Activated naive CD4-positive, alpha-beta T cell treated with anti-CD3 and anti-CD28 coated beads for 36 hours (primary cell): ENCODE measurements at regions of chr11 and their contacts with region 1.

Region 1: DNA sequence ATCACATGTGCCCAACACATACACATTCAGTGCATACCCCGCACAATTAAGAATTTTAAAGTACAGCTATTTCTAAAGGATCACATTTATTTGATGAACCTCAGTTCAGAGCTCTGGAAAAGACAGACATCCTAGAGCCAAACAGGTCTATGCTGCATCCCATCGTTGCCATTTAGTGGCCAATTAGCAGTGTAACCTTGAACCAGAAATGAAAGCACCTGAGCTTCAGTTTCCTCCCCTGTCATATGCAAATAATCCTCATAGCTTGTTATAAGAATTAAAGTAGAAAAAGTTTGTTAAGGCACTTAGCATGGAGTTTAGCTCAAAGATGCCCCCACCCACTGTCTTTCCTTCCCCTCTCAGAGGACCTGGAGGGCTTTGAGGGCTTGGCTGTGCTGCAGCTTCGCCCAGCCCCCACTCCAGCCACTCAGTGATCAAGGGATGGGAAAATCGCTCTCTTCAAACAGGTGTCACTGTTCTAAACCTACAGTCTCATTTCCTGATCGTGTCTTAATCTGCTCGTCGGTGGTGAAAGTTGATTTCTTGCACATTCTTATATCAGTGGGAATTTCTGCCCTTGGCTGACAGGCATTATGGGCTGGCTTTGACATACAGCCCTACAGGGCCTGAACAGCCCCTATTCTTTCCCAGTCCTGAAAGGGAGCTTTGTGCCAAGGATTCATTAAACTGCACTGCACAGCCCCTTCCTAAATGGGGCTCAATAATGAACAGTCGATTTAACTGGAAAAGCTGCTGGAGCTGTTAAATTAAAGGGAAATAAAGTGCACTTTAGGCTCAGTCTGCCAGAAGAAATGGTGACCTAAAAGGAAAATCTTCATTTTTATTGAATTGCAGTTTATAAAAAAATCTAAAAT is 23.3 kb upstream of the FAM181B start:
- DNase-seq: peak; percentile 21
- H3K4me3 Mint-ChIP-seq: peak overlapping the region; percentile 19
- H3K27ac Mint-ChIP-seq: no peak overlapping the region
- H3K4me1 Mint-ChIP-seq: peaks cover 26% of the 10 kb centered on the region
- H3K27me3 Mint-ChIP-seq: no peaks in the 10 kb centered on the region

Region 2: GRCh38 chr11:82733444-82734119 is 23.4 kb before region 1 on chr11 and contains the start of gene FAM181B:
- CTCF ChIA-PET with region 1: interaction called, 3 read pairs
- intact Hi-C with region 1: loop called (anchors 1 kb)
- DNase-seq: peak; percentile 53
- H3K4me3 Mint-ChIP-seq: peak within 1 kb of the TSS; percentile 68
- H3K27ac Mint-ChIP-seq: no peak within 1 kb of the TSS
- H3K4me1 Mint-ChIP-seq: peaks cover 14% of the 10 kb centered on the region
- H3K27me3 Mint-ChIP-seq: peaks cover 28% of the 10 kb centered on the region
- total RNA-seq, gene FAM181B: not detected

Region 3: GRCh38 chr11:82775736-82776346 is 18.8 kb after region 1 on chr11:
- CTCF ChIA-PET with region 1: interaction called, 20 read pairs
- intact Hi-C with region 1: no loop called
- DNase-seq: peak; percentile 68
- H3K4me3 Mint-ChIP-seq: no peak overlapping the region
- H3K27ac Mint-ChIP-seq: no peak overlapping the region
- H3K4me1 Mint-ChIP-seq: no peaks in the 10 kb centered on the region
- H3K27me3 Mint-ChIP-seq: no peaks in the 10 kb centered on the region